ENCODE measurements at regions of chr1 and their contacts with region 1.

Region 1: GRCh38 chr1:181112071-181112929 is 23.8 kb downstream of the IER5 start:
- DNase-seq: peak; percentile 97
- ATAC-seq: peak; percentile 90
- H3K4me3 ChIP-seq: no peak overlapping the region
- H3K27ac ChIP-seq: peak overlapping the region; percentile 59
- H3K4me1 ChIP-seq: peaks cover 88% of the 10 kb centered on the region
- H3K27me3 ChIP-seq: peaks cover under 1 to 3% of the 10 kb centered on the region in 2 experiments; a peak in 2 of 5 replicates
- CTCF ChIP-seq: peak; percentile 27; the same call in 1 of the 2 replicates
- EP300 ChIP-seq: peak; percentile 81 to 93; a peak in 3 of 4 replicates
- POLR2A ChIP-seq: no peak
- RAD21 ChIP-seq: 0 out of 2 replicates have a peak, but pooled peaks have one; percentile 19

Region 2: DNA sequence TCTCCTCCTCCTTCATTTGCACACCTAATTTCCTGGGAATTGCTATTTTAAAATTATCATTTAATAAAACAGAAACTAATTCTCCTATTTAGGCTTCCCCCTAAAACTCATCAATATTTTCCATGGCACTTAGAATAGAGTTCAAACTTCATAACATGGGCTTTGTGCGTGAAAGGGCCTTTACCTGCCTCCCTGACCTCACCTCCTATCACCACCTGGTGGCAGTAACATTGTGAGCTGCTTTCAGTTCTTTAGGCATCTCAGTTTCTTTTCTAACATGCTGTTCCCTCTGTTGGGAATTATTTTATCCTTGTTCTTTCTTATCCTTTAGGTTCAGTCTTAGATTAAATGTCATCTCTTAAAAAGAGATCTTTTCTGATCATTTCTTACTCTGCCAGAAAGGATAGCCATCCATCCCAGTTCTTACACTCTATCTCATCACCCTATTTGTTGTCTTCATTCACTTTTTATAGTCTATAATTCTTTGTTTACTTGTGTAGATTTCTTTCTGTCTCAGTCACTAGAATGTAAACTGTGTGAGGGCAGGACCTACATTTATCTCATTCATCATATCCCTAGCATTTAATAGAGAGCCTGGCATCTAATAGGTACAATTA is 333.4 kb before region 1 on chr1:
- CTCF ChIA-PET with region 1: no interaction called
- POLR2A ChIA-PET with region 1: no interaction called
- in situ Hi-C with region 1: no loop called
- intact Hi-C with region 1: no loop called
- DNase-seq: peak; percentile 28
- ATAC-seq: peak; percentile 74
- H3K4me3 ChIP-seq: no peak overlapping the region
- H3K27ac ChIP-seq: no peak overlapping the region
- H3K4me1 ChIP-seq: peaks cover 6% of the 10 kb centered on the region; the same call in 1 of the 2 replicates
- H3K27me3 ChIP-seq: no peaks in the 10 kb centered on the region
- CTCF ChIP-seq: peak; percentile 71
- EP300 ChIP-seq: no peak
- POLR2A ChIP-seq: no peak
- RAD21 ChIP-seq: 0 out of 2 replicates have a peak, but pooled peaks have one; percentile 18

Region 3: GRCh38 chr1:181128592-181129497 is 16.5 kb after region 1 on chr1:
- CTCF ChIA-PET with region 1: no interaction called
- POLR2A ChIA-PET with region 1: interaction called, 5 read pairs
- in situ Hi-C with region 1: no loop called
- intact Hi-C with region 1: loop called (anchors 2 kb)
- DNase-seq: no peak
- ATAC-seq: no peak
- H3K4me3 ChIP-seq: no peak overlapping the region
- H3K27ac ChIP-seq: no peak overlapping the region
- H3K4me1 ChIP-seq: peaks cover 58% of the 10 kb centered on the region
- H3K27me3 ChIP-seq: peaks cover 1 to 4% of the 10 kb centered on the region in 2 experiments; a peak in 1 of 5 replicates
- CTCF ChIP-seq: no peak
- EP300 ChIP-seq: no peak
- POLR2A ChIP-seq: no peak
- RAD21 ChIP-seq: no peak

Region 4: DNA sequence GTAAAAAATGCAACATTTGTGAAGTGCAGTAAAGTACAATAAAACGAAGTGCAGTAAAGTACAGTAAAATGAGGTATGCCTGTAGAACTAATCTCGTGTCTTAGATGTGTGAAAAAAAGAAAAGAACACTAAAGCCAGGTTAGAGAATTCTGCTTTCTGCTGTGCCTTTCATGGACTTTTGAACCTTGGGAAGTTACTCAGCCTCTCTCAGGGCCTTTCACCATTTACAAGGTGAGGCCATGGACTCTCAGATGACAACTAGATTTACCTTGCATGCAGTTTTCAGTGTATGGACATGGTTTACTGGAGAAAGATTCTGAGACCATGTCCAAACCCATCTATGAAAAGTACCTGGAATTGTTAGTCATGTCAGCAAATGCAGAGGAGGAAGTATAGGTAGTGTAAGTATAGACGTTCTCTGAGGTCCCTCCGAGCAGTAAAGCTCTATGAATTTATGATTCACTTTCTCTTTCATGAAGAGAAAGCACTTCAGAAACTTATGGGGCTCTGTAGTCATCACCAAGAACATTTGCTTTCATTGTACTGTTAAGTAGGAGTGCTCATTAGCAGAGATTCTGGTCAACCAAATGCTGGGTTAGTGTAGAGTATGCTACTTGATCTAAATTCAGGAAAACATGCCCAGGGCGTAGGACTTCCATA is 514.1 kb after region 1 on chr1:
- CTCF ChIA-PET with region 1: no interaction called
- POLR2A ChIA-PET with region 1: no interaction called
- in situ Hi-C with region 1: no loop called
- intact Hi-C with region 1: no loop called
- DNase-seq: no peak
- ATAC-seq: no peak
- H3K4me3 ChIP-seq: no peak overlapping the region
- H3K27ac ChIP-seq: no peak overlapping the region
- H3K4me1 ChIP-seq: no peaks in the 10 kb centered on the region
- H3K27me3 ChIP-seq: peaks cover 0 to 3% of the 10 kb centered on the region in 2 experiments; a peak in 1 of 5 replicates
- CTCF ChIP-seq: no peak
- EP300 ChIP-seq: no peak
- POLR2A ChIP-seq: no peak
- RAD21 ChIP-seq: no peak

Measured in HepG2 (cell line).